A549 (cell line): ENCODE measurements at regions of chr16 and their contacts with region 1.

Region 1: GRCh38 chr16:74309789-74310781 is 13.5 kb downstream of the PSMD7 start:
- DNase-seq: peak; percentile 57 to 65
- ATAC-seq: peak; percentile 73 to 75; a peak in 5 of 6 replicates
- H3K4me3 ChIP-seq: no peak overlapping the region
- H3K27ac ChIP-seq: no peak overlapping the region
- H3K4me1 ChIP-seq: no peaks in the 10 kb centered on the region
- CTCF ChIP-seq: peak; percentile 90
- EP300 ChIP-seq: no peak
- POLR2A ChIP-seq: no peak
- RAD21 ChIP-seq: peak; percentile 83 to 88

Region 2: GRCh38 chr16:74296432-74297144 is 13.5 kb before region 1 on chr16 and contains the start of gene PSMD7:
- CTCF ChIA-PET with region 1: interaction called, 55 read pairs
- POLR2A ChIA-PET with region 1: interaction called, 9 read pairs
- DNase-seq: peak; percentile 87 to 95
- ATAC-seq: peak; percentile 96 to 98
- H3K4me3 ChIP-seq: peak within 1 kb of the TSS; percentile 97
- H3K27ac ChIP-seq: peak within 1 kb of the TSS; percentile 97 to 99
- H3K4me1 ChIP-seq: peaks cover 28% of the 10 kb centered on the region; the same call in 2 of the 3 replicates
- CTCF ChIP-seq: no peak
- EP300 ChIP-seq: no peak
- POLR2A ChIP-seq: peak; percentile 84
- RAD21 ChIP-seq: no peak
- polyA plus RNA-seq, gene PSMD7: 170 and 211 TPM in 2 replicates

Region 3: DNA sequence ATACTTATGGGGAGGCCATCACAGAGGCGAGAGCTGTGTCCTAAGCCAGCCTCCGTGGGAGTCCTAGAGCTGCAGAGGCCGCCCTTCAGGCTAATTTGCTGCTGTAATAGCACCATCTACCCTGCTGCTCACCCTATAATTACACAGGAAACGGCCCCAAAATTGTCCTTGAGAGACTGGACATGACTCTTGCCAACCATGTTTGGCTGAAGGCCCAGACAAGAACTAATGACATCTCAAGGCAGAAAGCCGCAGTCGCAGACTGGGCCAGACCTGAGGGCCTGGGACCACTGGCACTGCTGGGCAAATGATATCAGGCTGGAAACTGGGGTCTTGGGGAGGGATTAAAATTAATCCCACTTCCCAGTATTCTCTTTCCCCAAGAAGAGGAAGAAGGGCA is 10.6 kb after region 1 on chr16:
- CTCF ChIA-PET with region 1: interaction called, 19 read pairs
- POLR2A ChIA-PET with region 1: no interaction called
- DNase-seq: no peak
- ATAC-seq: no peak
- H3K4me3 ChIP-seq: no peak overlapping the region
- H3K27ac ChIP-seq: no peak overlapping the region
- H3K4me1 ChIP-seq: no peaks in the 10 kb centered on the region
- CTCF ChIP-seq: no peak
- EP300 ChIP-seq: no peak
- POLR2A ChIP-seq: no peak
- RAD21 ChIP-seq: no peak

Region 4: DNA sequence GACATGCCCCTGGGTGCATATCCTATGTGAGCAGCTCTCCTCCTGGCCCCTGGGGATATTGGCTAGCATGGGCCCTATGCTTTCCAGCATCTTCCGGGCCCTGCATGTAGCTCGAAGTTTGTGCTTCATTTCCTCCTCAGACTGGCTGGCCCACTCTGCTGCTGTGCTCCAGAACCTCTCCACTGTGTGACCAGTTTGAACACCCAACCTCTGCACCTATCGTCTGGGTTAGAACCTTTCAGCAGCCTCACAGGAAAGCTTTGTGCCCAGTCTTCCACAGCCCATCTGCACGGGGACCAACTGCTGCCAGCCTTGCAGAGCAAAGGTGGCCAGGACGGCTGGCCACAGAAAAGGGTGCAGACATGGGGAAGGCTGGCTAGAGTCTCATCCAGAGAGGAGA is 121.4 kb after region 1 on chr16:
- CTCF ChIA-PET with region 1: interaction called, 10 read pairs
- POLR2A ChIA-PET with region 1: no interaction called
- DNase-seq: no peak
- ATAC-seq: no peak; a peak in 1 of 6 replicates
- H3K4me3 ChIP-seq: no peak overlapping the region
- H3K27ac ChIP-seq: peak overlapping the region in 1 of 2 experiments; percentile 55; a peak in 3 of 6 replicates
- H3K4me1 ChIP-seq: no peaks in the 10 kb centered on the region
- CTCF ChIP-seq: no peak
- EP300 ChIP-seq: no peak
- POLR2A ChIP-seq: no peak
- RAD21 ChIP-seq: no peak

Region 5: GRCh38 chr16:74623214-74623842 is 313.2 kb after region 1 on chr16:
- CTCF ChIA-PET with region 1: interaction called, 27 read pairs
- POLR2A ChIA-PET with region 1: interaction called, 3 read pairs
- DNase-seq: peak; percentile 57 to 68
- ATAC-seq: peak; percentile 69 to 75; a peak in 5 of 6 replicates
- H3K4me3 ChIP-seq: no peak overlapping the region
- H3K27ac ChIP-seq: no peak overlapping the region
- H3K4me1 ChIP-seq: no peaks in the 10 kb centered on the region
- CTCF ChIP-seq: peak; percentile 79
- EP300 ChIP-seq: no peak
- POLR2A ChIP-seq: no peak
- RAD21 ChIP-seq: peak; percentile 61 to 72